Activated CD8-positive, alpha-beta T cell treated with anti-CD3 and anti-CD28 coated beads for 36 hours (primary cell): ENCODE measurements at regions of chr2 and their contacts with region 1.

Region 1: GRCh38 chr2:60674524-60675165 is 81.4 kb upstream of the PAPOLG start:
- DNase-seq: peak; percentile 93
- ATAC-seq: peak; percentile 100
- H3K4me3 Mint-ChIP-seq: no peak overlapping the region
- H3K27ac Mint-ChIP-seq: no peak overlapping the region
- H3K4me1 Mint-ChIP-seq: peaks cover 2% of the 10 kb centered on the region
- H3K27me3 Mint-ChIP-seq: no peaks in the 10 kb centered on the region
- CTCF ChIP-seq: peak; percentile 85

Region 2: GRCh38 chr2:60581433-60582282 is 93.0 kb before region 1 on chr2:
- CTCF ChIA-PET with region 1: interaction called, 10 read pairs
- POLR2A ChIA-PET with region 1: no interaction called
- intact Hi-C with region 1: no loop called
- DNase-seq: peak; percentile 75
- ATAC-seq: peak; percentile 99
- H3K4me3 Mint-ChIP-seq: no peak overlapping the region
- H3K27ac Mint-ChIP-seq: no peak overlapping the region
- H3K4me1 Mint-ChIP-seq: peaks cover 2% of the 10 kb centered on the region
- H3K27me3 Mint-ChIP-seq: peaks cover 29% of the 10 kb centered on the region
- CTCF ChIP-seq: peak; percentile 98

Region 3: DNA sequence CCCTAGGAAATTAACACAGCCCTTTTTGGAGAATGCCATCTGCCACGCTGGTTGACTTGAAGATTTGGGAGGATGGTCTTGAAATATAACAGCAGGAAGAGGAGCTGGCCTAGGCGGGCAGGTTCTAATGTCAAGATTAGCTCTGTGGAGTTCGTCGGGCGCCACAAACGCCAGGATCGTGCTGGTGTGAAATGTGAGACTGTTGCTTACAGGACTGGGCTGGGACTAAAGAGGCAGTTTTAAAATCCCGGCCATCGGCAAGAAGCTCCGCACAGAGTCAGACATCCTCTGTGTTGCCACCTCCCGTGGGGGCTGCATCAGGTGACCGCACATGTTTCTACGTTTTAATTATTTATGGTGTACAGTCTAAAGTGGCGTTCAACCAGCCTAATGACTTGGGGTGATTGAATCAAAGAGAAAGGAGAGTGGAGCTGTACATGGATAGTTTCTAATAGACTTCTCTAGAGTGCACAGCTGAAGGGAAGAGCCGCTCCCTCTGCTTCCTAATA is 21.8 kb before region 1 on chr2:
- CTCF ChIA-PET with region 1: interaction called, 39 read pairs
- POLR2A ChIA-PET with region 1: interaction called, 3 read pairs
- intact Hi-C with region 1: no loop called
- DNase-seq: no peak
- ATAC-seq: no peak
- H3K4me3 Mint-ChIP-seq: no peak overlapping the region
- H3K27ac Mint-ChIP-seq: no peak overlapping the region
- H3K4me1 Mint-ChIP-seq: no peaks in the 10 kb centered on the region
- H3K27me3 Mint-ChIP-seq: peaks cover 2% of the 10 kb centered on the region
- CTCF ChIP-seq: no peak

Region 4: GRCh38 chr2:60695793-60696192 is 21.1 kb after region 1 on chr2:
- CTCF ChIA-PET with region 1: interaction called, 17 read pairs
- POLR2A ChIA-PET with region 1: no interaction called
- intact Hi-C with region 1: no loop called
- DNase-seq: no peak
- ATAC-seq: no peak
- H3K4me3 Mint-ChIP-seq: no peak overlapping the region
- H3K27ac Mint-ChIP-seq: no peak overlapping the region
- H3K4me1 Mint-ChIP-seq: no peaks in the 10 kb centered on the region
- H3K27me3 Mint-ChIP-seq: no peaks in the 10 kb centered on the region
- CTCF ChIP-seq: no peak